ENCODE measurements at regions of chr2 and their contacts with region 1.

Region 1: DNA sequence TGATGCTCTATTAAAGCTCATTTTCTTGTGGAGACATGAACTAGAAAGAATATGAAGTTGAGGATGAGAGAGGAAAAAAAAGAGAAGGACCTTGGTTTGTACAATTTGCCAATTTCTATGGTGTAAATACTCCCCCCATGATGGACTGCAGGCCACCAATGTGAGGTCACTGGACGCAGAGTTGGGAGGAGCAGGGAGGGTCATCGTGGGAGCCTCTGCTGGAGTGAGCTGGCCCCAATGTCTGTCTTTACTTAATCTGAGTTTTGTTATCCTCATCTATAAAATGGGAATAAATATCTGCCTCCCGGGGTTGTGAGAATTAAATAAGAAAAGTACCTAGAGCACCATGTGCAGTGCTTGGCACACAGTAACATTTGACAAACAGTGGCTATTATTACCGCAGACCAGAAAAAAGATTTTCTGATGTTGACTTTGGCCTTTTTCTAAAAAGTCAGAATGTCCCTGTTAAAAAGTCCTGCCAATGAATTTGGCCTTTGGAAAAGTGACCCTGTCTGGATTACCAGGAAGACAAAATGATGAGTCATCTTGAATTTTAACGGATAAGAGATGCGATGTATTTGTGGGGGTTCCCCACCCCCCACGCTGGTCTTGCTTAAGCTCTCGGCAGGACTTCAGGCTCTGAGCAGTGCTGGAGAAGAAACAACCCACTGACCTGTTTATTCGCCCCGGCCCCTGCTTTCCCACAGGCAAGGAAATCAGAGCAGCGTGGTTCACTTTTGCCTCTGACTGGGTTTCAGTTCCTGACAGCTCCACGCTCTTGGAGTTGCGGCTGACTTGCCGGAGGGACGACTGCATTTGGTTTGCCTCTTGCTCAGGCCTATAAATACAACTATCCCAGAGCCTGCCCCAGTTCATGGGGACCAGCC is 50.3 kb upstream of the FOSL2 start:
- DNase-seq: peak; percentile 75 to 85 (median 81)
- ATAC-seq: peak; percentile 49 to 63 (median 52)
- H3K4me3 ChIP-seq: peak overlapping the region in 1 of 3 donors; percentile 14
- H3K27ac ChIP-seq: peak overlapping the region; percentile 67 to 71 (median 70)
- H3K4me1 ChIP-seq: peaks cover 0 to 72% (median 28%) of the 10 kb centered on the region in 4 donors
- H3K27me3 ChIP-seq: no peaks in the 10 kb centered on the region
- CTCF ChIP-seq: no peak
- POLR2A ChIP-seq: peak; percentile 23

Region 2: DNA sequence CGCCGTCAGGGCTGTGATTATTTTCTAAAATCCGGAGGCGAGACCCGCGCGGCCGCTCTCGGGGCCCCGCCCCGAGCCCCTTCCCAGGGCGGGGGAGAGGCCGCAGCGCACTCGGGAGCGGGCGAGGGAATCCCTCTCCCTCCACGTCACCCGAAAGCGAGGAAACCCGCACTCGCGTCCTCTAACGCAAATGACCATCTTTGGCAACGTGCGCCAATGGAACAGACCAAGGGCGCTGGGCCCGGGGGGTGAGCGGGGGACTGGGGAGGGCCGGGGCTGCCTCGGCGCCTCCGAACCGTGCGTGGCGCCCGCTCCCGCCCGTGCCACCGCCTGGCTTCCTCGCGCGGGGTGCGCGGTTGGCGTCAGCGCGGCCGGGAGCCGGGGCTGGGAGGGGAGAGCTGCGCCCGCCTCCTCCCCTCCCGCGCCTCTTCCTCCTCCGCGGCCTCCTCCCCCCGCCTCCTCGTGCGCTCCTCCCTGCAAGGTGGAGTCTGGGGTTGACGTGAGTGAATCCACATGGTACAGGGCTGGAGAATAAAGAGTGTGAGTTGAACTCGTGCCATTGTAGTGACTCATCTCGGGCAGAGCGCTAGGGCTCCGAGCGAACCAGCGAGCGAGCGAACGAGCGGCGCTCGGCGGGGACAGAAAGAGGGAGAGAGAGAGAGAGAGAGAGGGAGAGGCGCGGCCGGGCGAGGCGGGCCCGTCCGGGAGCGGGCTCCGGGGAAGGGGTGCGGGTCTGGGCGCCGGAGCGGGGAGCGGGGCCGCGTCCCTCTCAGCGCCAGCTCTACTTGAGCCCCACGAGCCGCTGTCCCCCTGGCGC is 50.2 kb after region 1 on chr2 and contains the start of gene FOSL2:
- intact Hi-C with region 1: loop called in 1 of 2 experiments (anchors 5 kb)
- DNase-seq: peak; percentile 97 to 98 (median 98)
- ATAC-seq: peak; percentile 63 to 83 (median 76)
- H3K4me3 ChIP-seq: peak within 1 kb of the TSS; percentile 77 to 85 (median 78)
- H3K27ac ChIP-seq: peak within 1 kb of the TSS; percentile 99 to 100 (median 99)
- H3K4me1 ChIP-seq: peaks cover 0 to 23% (median 4%) of the 10 kb centered on the region in 4 donors
- H3K27me3 ChIP-seq: no peaks in the 10 kb centered on the region
- CTCF ChIP-seq: no peak
- POLR2A ChIP-seq: peak; percentile 100
- total RNA-seq, gene FOSL2: 8.1 to 70.7 (median 14.9) TPM